GM12878 (cell line): ENCODE measurements at regions of chr2 and their contacts with region 1.

Region 1: DNA sequence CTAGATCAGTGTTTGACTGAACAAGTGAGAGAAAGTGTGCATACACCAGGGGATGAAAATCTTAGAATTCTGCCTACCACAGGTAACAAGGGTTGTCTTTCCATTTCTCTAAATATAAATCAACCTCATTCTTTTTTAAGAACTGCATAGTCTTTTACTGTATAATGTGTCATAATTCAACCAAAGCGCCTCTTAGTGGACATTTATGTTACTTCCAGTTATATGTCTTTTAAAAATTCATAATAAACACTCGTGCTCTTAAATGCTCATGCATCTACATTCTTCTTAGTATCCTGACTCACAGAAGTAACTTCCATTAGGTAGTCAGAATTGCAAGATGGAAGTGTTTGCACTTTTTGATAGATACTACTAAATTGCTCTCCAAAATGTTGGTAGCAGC is 76.2 kb downstream of the CHRNA1 start:
- DNase-seq: no peak
- ATAC-seq: peak; percentile 70
- H3K4me3 ChIP-seq: no peak overlapping the region
- H3K27ac ChIP-seq: no peak overlapping the region
- H3K4me1 ChIP-seq: peaks cover 2% of the 10 kb centered on the region
- H3K27me3 ChIP-seq: peaks cover 0 to 2% of the 10 kb centered on the region in 2 experiments; a peak in 1 of 4 replicates
- CTCF ChIP-seq: peak; percentile 26 to 56 (median 42); a peak in 5 of 6 replicates
- EP300 ChIP-seq: no peak
- POLR2A ChIP-seq: no peak
- RAD21 ChIP-seq: peak; percentile 50; the same call in 1 of the 2 replicates

Region 2: GRCh38 chr2:174492963-174493431 is 195.1 kb before region 1 on chr2:
- CTCF ChIA-PET with region 1: interaction called, 16 read pairs
- POLR2A ChIA-PET with region 1: no interaction called
- RAD21 ChIA-PET with region 1: no interaction called
- SMC1A ChIA-PET with region 1: interaction called, 7 read pairs
- in situ Hi-C with region 1: no loop called
- intact Hi-C with region 1: no loop called
- DNase-seq: peak; percentile 85
- ATAC-seq: peak; percentile 94
- H3K4me3 ChIP-seq: peak overlapping the region; percentile 41
- H3K27ac ChIP-seq: peak overlapping the region; percentile 87
- H3K4me1 ChIP-seq: peaks cover 17% of the 10 kb centered on the region; the same call in 1 of the 2 replicates
- H3K27me3 ChIP-seq: no peaks in the 10 kb centered on the region
- CTCF ChIP-seq: no peak
- EP300 ChIP-seq: peak; percentile 33 to 65; a peak in 2 of 4 replicates
- POLR2A ChIP-seq: no peak
- RAD21 ChIP-seq: no peak

Region 3: GRCh38 chr2:174553811-174554493 is 134.1 kb before region 1 on chr2:
- CTCF ChIA-PET with region 1: interaction called, 14 read pairs
- POLR2A ChIA-PET with region 1: no interaction called
- RAD21 ChIA-PET with region 1: interaction called, 3 read pairs
- SMC1A ChIA-PET with region 1: interaction called, 6 read pairs
- in situ Hi-C with region 1: no loop called
- intact Hi-C with region 1: no loop called
- DNase-seq: no peak
- ATAC-seq: peak; percentile 83
- H3K4me3 ChIP-seq: no peak overlapping the region
- H3K27ac ChIP-seq: peak overlapping the region; percentile 57
- H3K4me1 ChIP-seq: peaks cover 15% of the 10 kb centered on the region
- H3K27me3 ChIP-seq: no peaks in the 10 kb centered on the region
- CTCF ChIP-seq: no peak
- EP300 ChIP-seq: no peak
- POLR2A ChIP-seq: no peak
- RAD21 ChIP-seq: no peak

Region 4: DNA sequence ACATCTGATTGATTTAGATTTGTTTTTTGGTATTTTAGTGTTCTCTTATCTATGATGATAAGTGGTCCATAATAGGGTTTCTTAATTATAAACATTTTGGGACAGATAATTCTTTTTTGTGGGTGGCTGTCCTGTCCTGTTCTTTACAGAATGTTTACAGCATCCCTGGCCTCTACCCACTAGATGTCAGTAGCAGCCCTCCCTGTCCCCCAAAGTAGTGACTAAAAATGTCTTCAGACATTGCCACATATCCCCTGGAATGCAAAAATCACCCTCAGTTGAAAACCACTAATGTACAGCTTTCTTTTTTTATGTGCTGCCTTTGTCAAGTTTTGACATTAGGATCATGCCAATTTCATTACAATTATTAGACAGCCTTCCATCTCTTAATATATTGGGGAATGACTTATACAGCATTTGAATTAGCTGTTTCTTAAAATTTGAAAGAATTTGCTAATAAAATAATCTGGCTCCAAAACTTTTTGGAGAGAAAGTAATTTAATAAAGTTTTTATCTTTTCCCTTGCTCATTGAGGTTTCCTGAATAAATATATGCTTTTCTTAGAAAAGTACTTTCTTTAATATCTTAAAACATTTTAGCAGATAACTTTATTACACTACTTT is 110.0 kb before region 1 on chr2:
- CTCF ChIA-PET with region 1: interaction called, 149 read pairs
- POLR2A ChIA-PET with region 1: no interaction called
- RAD21 ChIA-PET with region 1: interaction called, 66 read pairs
- SMC1A ChIA-PET with region 1: interaction called, 150 read pairs
- in situ Hi-C with region 1: loop called (anchors 25 kb)
- intact Hi-C with region 1: loop called (anchors 1 kb)
- DNase-seq: no peak
- ATAC-seq: peak; percentile 71
- H3K4me3 ChIP-seq: no peak overlapping the region
- H3K27ac ChIP-seq: no peak overlapping the region
- H3K4me1 ChIP-seq: peaks cover 7% of the 10 kb centered on the region
- H3K27me3 ChIP-seq: no peaks in the 10 kb centered on the region
- CTCF ChIP-seq: peak; percentile 60 to 77 (median 64); a peak in 5 of 6 replicates
- EP300 ChIP-seq: no peak
- POLR2A ChIP-seq: no peak
- RAD21 ChIP-seq: peak; percentile 88

Region 5: DNA sequence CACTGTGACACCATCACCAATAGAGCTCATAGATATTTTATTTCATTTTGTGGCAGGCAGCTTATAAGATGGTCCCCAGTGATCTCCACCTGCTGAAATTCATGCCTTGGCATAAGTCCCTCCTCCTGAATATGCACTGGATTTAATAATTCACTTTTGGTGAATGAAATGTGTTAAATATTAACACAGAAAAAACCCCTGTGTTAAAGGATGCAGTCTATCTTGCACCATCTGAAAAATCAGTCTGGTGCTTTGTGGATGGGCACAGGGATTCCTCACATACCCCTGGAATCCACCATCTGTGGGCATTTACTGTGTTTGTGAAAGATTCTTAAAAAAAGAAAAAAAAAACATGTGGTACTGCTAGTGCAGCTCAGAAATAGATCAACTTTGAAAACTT is 64.4 kb before region 1 on chr2:
- CTCF ChIA-PET with region 1: interaction called, 534 read pairs
- POLR2A ChIA-PET with region 1: interaction called, 7 read pairs
- RAD21 ChIA-PET with region 1: interaction called, 19 read pairs
- SMC1A ChIA-PET with region 1: interaction called, 8 read pairs
- in situ Hi-C with region 1: no loop called
- intact Hi-C with region 1: no loop called
- DNase-seq: no peak
- ATAC-seq: peak; percentile 61
- H3K4me3 ChIP-seq: no peak overlapping the region
- H3K27ac ChIP-seq: no peak overlapping the region
- H3K4me1 ChIP-seq: no peaks in the 10 kb centered on the region; the same call in 1 of the 2 replicates
- H3K27me3 ChIP-seq: no peaks in the 10 kb centered on the region
- CTCF ChIP-seq: no peak
- EP300 ChIP-seq: no peak
- POLR2A ChIP-seq: no peak
- RAD21 ChIP-seq: no peak

Region 6: DNA sequence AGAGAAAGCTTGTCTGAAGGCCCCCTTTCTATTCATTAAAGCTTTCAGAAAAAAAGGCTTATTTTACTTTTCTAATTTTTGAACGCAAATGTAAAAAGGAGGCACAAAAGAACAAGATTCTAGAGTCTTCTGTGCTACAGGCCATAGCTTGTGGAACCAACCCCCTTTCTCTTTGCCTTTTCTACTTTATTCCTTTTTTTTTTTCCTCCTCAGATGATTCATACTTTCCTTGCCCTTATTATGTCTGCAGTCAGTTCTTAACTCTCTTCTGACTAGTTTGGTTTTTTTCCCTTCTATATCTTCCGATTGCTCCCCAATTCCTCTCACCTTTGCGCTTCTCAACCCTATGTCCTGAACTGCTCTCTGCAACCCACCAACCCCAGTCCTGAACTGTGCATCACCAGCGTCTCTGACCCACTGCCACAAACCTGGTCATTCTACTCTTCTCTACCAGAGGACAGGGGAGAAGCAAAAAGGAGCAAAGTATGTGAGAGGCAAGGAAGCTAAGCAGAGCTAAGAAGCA is 33.6 kb before region 1 on chr2:
- CTCF ChIA-PET with region 1: interaction called, 15 read pairs
- POLR2A ChIA-PET with region 1: no interaction called
- RAD21 ChIA-PET with region 1: interaction called, 5 read pairs
- SMC1A ChIA-PET with region 1: interaction called, 7 read pairs
- in situ Hi-C with region 1: no loop called
- intact Hi-C with region 1: no loop called
- DNase-seq: no peak
- ATAC-seq: no peak
- H3K4me3 ChIP-seq: no peak overlapping the region
- H3K27ac ChIP-seq: no peak overlapping the region
- H3K4me1 ChIP-seq: no peaks in the 10 kb centered on the region
- H3K27me3 ChIP-seq: no peaks in the 10 kb centered on the region
- CTCF ChIP-seq: no peak
- EP300 ChIP-seq: no peak
- POLR2A ChIP-seq: no peak
- RAD21 ChIP-seq: no peak

Region 7: DNA sequence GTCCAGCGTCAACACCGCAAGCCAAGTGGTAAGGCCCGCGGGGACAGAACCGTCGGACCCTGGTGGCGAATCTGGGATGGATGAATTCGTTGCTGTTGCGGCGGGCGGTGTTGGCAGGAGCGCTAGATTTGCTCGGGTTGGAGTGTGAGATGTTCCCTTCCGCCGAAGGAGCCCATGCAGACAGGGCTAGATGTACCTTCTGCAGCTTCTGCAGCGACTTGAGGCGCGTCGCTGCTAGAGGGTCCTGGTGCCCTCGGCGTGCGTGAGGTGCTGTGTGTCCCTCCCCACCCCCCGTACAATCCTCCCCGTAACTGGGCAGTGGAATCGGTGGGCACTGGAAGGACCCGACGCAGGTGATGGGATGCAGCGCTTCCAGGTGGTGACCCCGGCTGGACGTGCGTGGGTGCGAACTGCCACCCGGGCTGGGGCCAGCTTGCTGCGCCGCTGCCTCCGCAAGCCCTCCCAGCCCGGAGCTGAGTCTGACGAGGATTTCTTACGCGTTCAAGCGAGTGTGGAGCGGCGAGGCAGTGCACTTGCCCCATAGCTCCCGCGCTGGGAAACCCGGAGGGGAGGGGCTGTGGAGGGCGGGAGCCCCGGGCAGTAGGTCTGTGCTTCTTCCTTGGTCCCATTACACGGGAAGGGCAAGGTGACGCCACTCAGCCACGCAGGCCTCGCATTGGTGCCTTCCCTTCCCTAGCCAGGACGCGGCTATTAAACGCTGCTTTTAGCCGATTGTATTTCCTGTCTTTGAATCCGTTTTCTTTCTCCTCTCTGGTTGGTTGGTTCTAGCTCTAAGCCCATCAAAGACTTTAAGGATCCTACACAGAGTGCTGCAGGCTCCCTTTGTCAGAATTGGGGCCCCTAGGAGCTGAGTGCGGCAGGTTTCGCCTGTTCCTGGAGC is 42.0 kb after region 1 on chr2:
- CTCF ChIA-PET with region 1: no interaction called
- POLR2A ChIA-PET with region 1: no interaction called
- RAD21 ChIA-PET with region 1: no interaction called
- SMC1A ChIA-PET with region 1: no interaction called
- in situ Hi-C with region 1: no loop called
- intact Hi-C with region 1: no loop called
- DNase-seq: no peak
- ATAC-seq: peak; percentile 48
- H3K4me3 ChIP-seq: no peak overlapping the region
- H3K27ac ChIP-seq: no peak overlapping the region
- H3K4me1 ChIP-seq: no peaks in the 10 kb centered on the region
- H3K27me3 ChIP-seq: peaks cover 9 to 12% of the 10 kb centered on the region in 2 experiments
- CTCF ChIP-seq: no peak
- EP300 ChIP-seq: no peak
- POLR2A ChIP-seq: no peak
- RAD21 ChIP-seq: no peak

Region 8: DNA sequence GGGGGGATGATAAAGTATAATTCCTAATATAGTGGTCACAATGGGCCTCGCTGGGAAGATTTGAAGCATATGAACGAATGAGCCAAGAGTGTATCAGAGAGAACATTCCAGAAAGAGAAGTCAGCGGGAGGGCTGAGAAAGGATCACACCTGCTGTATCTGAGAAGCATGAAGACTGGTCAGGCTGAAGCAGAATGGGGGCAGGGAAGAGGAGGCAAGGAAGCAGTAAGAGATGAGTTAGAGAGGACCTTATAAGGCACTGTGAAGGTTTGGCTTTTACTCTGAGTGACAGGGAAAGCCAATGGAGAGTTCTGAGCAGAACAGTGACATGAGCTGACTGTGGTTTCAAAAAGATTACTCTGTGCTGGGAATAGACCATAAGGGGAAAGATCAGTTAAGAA is 243.6 kb after region 1 on chr2:
- CTCF ChIA-PET with region 1: no interaction called
- POLR2A ChIA-PET with region 1: no interaction called
- RAD21 ChIA-PET with region 1: no interaction called
- SMC1A ChIA-PET with region 1: no interaction called
- in situ Hi-C with region 1: no loop called
- intact Hi-C with region 1: no loop called
- DNase-seq: no peak
- ATAC-seq: no peak
- H3K4me3 ChIP-seq: no peak overlapping the region
- H3K27ac ChIP-seq: no peak overlapping the region
- H3K4me1 ChIP-seq: no peaks in the 10 kb centered on the region
- H3K27me3 ChIP-seq: no peaks in the 10 kb centered on the region
- CTCF ChIP-seq: no peak
- EP300 ChIP-seq: no peak
- POLR2A ChIP-seq: no peak
- RAD21 ChIP-seq: no peak